ENCODE measurements at regions of chr14 and their contacts with region 1.

Region 1: GRCh38 chr14:69101331-69101826 is 51.5 kb downstream of the DCAF5 start:
- DNase-seq: no peak
- H3K4me3 Mint-ChIP-seq: no peak overlapping the region
- H3K27ac Mint-ChIP-seq: peak overlapping the region; percentile 28
- H3K4me1 Mint-ChIP-seq: peaks cover 13% of the 10 kb centered on the region
- H3K27me3 Mint-ChIP-seq: no peaks in the 10 kb centered on the region

Region 2: DNA sequence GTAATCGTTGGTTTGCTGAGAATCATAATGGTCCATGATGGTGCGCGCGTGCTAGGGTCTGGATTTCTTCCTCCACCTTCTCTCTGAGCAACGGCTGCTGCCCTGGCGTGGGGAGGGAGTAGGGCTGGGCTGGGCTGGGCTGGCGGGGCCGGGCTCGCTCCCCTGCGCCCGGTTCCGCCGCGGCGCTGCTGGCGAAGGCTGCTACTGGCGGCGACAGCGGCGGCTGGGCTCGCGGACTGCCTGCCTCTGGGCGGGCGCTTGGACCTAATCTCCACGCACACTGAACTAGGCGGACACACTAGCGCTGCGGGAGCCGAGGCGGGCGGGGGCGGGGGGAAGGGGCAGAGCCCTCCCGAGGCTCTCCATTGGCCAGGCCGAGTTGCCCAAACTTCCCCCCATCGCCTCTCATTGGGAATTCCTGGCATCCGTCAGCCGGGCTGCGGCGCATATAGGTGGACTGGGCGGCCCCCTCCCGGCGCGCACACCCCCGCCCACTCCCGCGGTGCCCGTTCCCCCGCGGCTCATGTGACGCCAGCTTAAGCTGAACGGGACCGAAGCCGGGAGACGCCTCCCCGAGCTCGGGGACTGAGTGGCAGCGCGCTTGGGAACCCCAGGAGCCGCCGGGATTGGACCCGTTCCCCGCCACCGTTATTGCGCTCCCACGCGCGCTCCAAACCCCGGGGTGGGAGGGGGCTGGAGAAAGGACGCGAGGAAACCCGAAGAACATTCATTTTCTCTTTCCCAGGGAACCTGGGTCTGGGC is 122.2 kb before region 1 on chr14 and contains the start of gene ACTN1:
- CTCF ChIA-PET with region 1: no interaction called
- POLR2A ChIA-PET with region 1: no interaction called
- intact Hi-C with region 1: loop called (anchors 5 kb)
- DNase-seq: peak; percentile 85
- H3K4me3 Mint-ChIP-seq: peak within 1 kb of the TSS; percentile 84
- H3K27ac Mint-ChIP-seq: peak within 1 kb of the TSS; percentile 78
- H3K4me1 Mint-ChIP-seq: peaks cover 27% of the 10 kb centered on the region
- H3K27me3 Mint-ChIP-seq: peaks cover 4% of the 10 kb centered on the region
- total RNA-seq, gene ACTN1: 70.6 to 72.2 TPM